Naive thymus-derived CD4-positive, alpha-beta T cell (primary cell): ENCODE measurements at regions of chr7 and their contacts with region 1.

Region 1: GRCh38 chr7:44638611-44639557 is 32.5 kb downstream of the OGDH start:
- DNase-seq: peak; percentile 15 to 81 (median 40)
- ATAC-seq: peak; percentile 83
- H3K4me3 ChIP-seq: peak overlapping the region; percentile 28
- H3K4me3 Mint-ChIP-seq: peak overlapping the region; percentile 57 to 95 (median 78)
- H3K27ac ChIP-seq: peak overlapping the region; percentile 79
- H3K27ac Mint-ChIP-seq: peak overlapping the region; percentile 92 to 100 (median 98)
- H3K4me1 ChIP-seq: peaks cover 37 to 77% of the 10 kb centered on the region in 2 donors
- H3K4me1 Mint-ChIP-seq: peaks cover 46 to 80% (median 57%) of the 10 kb centered on the region in 7 donors
- H3K27me3 ChIP-seq: no peaks in the 10 kb centered on the region
- H3K27me3 Mint-ChIP-seq: no peaks in the 10 kb centered on the region

Region 2: DNA sequence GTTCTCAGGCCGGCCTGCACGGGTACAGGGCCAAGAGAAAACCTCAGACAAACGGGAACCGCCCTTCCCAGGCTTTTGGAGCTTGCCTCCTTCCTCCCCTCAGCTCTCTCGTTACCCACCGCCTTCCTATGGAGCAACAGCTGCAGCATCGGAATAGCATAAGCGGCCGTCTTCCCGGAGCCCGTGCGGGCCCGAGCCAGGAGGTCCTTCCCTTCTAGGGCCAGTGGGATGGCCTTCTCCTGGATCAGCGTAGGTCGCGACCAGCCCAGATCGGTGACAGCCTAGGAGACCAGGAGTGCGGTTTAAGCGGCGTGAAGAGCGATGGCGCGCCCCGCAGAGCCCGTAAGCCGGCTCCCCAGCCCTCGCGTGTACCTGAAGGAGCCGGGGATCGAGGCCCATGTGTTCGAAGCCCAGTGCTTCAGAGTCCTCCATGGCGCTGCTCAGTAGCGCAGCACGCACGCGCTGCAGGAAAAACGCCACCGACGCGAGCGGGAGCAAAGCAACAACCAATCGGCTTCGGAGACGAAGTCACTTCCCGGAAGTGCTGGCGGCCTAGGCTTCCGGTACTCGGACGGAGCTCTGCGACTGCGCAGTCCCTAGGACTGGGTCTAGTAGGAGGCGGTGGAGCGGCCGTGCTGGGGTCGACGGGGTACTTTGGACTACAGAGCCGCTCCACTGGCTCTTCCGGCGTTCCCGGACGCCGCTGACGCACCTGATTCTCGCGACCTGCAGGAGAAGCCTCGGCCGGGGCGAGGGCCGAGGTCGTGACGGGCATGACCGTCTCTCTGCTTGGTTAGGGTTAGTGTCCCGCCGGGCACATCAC is 65.2 kb before region 1 on chr7 and contains the start of gene DDX56:
- CTCF ChIA-PET with region 1: no interaction called
- POLR2A ChIA-PET with region 1: interaction called, 3 read pairs
- intact Hi-C with region 1: loop called in 1 of 2 experiments (anchors 1 kb)
- DNase-seq: peak; percentile 72 to 90 (median 87)
- ATAC-seq: peak; percentile 97
- H3K4me3 ChIP-seq: peak within 1 kb of the TSS; percentile 95
- H3K4me3 Mint-ChIP-seq: peak within 1 kb of the TSS; percentile 91 to 98 (median 95)
- H3K27ac ChIP-seq: peak within 1 kb of the TSS; percentile 95
- H3K27ac Mint-ChIP-seq: peak within 1 kb of the TSS; percentile 92 to 99 (median 98)
- H3K4me1 ChIP-seq: peaks cover 19 to 27% of the 10 kb centered on the region in 2 donors
- H3K4me1 Mint-ChIP-seq: peaks cover 20 to 48% (median 33%) of the 10 kb centered on the region in 7 donors
- H3K27me3 ChIP-seq: no peaks in the 10 kb centered on the region
- H3K27me3 Mint-ChIP-seq: no peaks in the 10 kb centered on the region
- total RNA-seq, gene DDX56: 82.8 to 124 (median 100.0) TPM

Region 3: GRCh38 chr7:44587843-44588711 is 50.8 kb before region 1 on chr7:
- CTCF ChIA-PET with region 1: no interaction called
- POLR2A ChIA-PET with region 1: interaction called, 4 read pairs
- intact Hi-C with region 1: loop called in 1 of 2 experiments (anchors 1 kb)
- DNase-seq: peak in 7 of 9 donors; percentile 35 to 63 (median 60)
- ATAC-seq: peak; percentile 90
- H3K4me3 ChIP-seq: no peak overlapping the region
- H3K4me3 Mint-ChIP-seq: no peak overlapping the region
- H3K27ac ChIP-seq: no peak overlapping the region
- H3K27ac Mint-ChIP-seq: peak overlapping the region in 3 of 9 donors; percentile 6 to 71 (median 25)
- H3K4me1 ChIP-seq: peaks cover 0 to 4% of the 10 kb centered on the region in 2 donors
- H3K4me1 Mint-ChIP-seq: peaks cover 0 to 18% (median 6%) of the 10 kb centered on the region in 7 donors
- H3K27me3 ChIP-seq: no peaks in the 10 kb centered on the region
- H3K27me3 Mint-ChIP-seq: peaks cover 0 to 9% (median 0%) of the 10 kb centered on the region in 5 donors

Region 4: GRCh38 chr7:44622307-44623151 is 16.4 kb before region 1 on chr7:
- CTCF ChIA-PET with region 1: no interaction called
- POLR2A ChIA-PET with region 1: interaction called, 5 read pairs
- intact Hi-C with region 1: loop called in 1 of 2 experiments (anchors 1 kb)
- DNase-seq: peak in 1 of 9 donors; percentile 44
- ATAC-seq: peak; percentile 65
- H3K4me3 ChIP-seq: peak overlapping the region; percentile 9
- H3K4me3 Mint-ChIP-seq: peak overlapping the region in 4 of 10 donors; percentile 14 to 80 (median 40)
- H3K27ac ChIP-seq: no peak overlapping the region
- H3K27ac Mint-ChIP-seq: peak overlapping the region in 8 of 9 donors; percentile 11 to 95 (median 63)
- H3K4me1 ChIP-seq: peaks cover 18 to 82% of the 10 kb centered on the region in 2 donors
- H3K4me1 Mint-ChIP-seq: peaks cover 41 to 85% (median 62%) of the 10 kb centered on the region in 7 donors
- H3K27me3 ChIP-seq: no peaks in the 10 kb centered on the region
- H3K27me3 Mint-ChIP-seq: no peaks in the 10 kb centered on the region

Region 5: GRCh38 chr7:44681645-44682044 is 42.8 kb after region 1 on chr7:
- CTCF ChIA-PET with region 1: no interaction called
- POLR2A ChIA-PET with region 1: interaction called, 7 read pairs
- intact Hi-C with region 1: loop called in 1 of 2 experiments (anchors 5 kb)
- DNase-seq: no peak
- ATAC-seq: no peak
- H3K4me3 ChIP-seq: no peak overlapping the region
- H3K4me3 Mint-ChIP-seq: no peak overlapping the region
- H3K27ac ChIP-seq: no peak overlapping the region
- H3K27ac Mint-ChIP-seq: no peak overlapping the region
- H3K4me1 ChIP-seq: no peaks in the 10 kb centered on the region
- H3K4me1 Mint-ChIP-seq: peaks cover 0 to 4% (median 0%) of the 10 kb centered on the region in 7 donors
- H3K27me3 ChIP-seq: no peaks in the 10 kb centered on the region
- H3K27me3 Mint-ChIP-seq: no peaks in the 10 kb centered on the region

Region 6: DNA sequence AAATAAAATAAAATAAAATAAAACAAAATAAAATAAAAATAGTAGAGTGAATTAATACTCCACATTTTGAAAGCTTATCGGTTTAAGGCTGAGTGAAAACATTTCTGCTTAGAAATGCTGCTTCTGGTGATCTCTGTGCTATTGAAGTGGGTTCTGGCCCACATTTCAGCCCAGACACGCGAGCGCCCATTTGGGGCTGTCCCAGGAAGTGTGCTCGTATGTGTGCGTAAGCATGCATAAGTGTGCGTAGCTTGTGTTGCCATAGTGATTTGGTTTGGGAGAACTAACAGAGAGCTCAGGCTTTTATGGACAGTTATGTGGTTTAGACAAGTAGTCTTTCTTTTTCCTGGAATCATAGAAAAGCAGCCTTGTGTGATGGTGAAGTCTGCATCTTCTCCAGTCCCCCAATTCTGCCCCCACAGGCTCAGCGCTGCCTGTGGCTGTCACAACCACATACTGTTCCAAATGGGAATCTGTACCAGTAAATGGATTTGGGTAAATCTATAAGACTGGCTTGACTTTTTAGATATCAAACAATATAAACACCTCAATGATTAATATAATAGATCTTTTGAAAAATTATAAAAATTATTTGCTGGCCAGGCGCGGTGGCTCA is 276.2 kb after region 1 on chr7:
- CTCF ChIA-PET with region 1: no interaction called
- POLR2A ChIA-PET with region 1: no interaction called
- intact Hi-C with region 1: loop called in 1 of 2 experiments (anchors 1 kb)
- DNase-seq: peak in 8 of 9 donors; percentile 44 to 87 (median 74)
- ATAC-seq: peak; percentile 99
- H3K4me3 ChIP-seq: no peak overlapping the region
- H3K4me3 Mint-ChIP-seq: peak overlapping the region in 7 of 10 donors; percentile 12 to 71 (median 53)
- H3K27ac ChIP-seq: peak overlapping the region; percentile 48
- H3K27ac Mint-ChIP-seq: peak overlapping the region in 8 of 9 donors; percentile 61 to 92 (median 84)
- H3K4me1 ChIP-seq: no peaks in the 10 kb centered on the region
- H3K4me1 Mint-ChIP-seq: peaks cover 0 to 28% (median 5%) of the 10 kb centered on the region in 7 donors
- H3K27me3 ChIP-seq: no peaks in the 10 kb centered on the region
- H3K27me3 Mint-ChIP-seq: no peaks in the 10 kb centered on the region